CD14-positive monocyte (primary cell): ENCODE measurements at regions of chr3 and their contacts with region 1.

Region 1: DNA sequence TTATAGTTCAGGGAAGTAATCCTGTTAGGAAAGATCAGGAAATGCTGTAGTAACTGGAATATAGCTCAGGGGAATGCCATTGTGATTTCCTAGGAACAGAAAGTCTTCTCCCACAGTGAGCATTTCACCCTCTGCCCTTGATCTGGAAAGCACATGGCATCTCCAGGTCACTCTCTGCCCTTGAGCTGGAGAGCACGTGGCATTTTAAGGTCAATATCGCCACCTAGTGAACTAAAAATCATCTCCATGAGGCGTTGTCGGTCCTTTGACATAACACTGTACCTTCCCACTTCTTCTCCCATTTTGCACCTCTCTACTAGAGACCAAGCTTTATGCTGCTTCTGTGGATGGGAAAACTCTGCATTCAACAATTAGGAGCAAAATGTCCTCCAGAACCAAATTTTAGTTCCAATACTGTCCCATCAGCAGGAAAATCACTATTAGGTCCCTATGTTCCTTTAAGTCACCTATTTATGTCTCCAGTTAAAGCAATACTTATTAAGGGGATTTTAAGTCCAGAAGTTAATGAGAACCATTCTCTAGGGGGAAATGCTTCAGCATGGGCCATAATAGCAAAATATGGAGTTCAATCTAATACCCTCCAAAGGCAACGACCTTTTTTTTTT is 54.7 kb upstream of the GK5 start:
- DNase-seq: peak; percentile 61 to 78 (median 76)
- H3K4me3 ChIP-seq: no peak overlapping the region
- H3K4me3 Mint-ChIP-seq: no peak overlapping the region
- H3K27ac ChIP-seq: no peak overlapping the region
- H3K27ac Mint-ChIP-seq: peak overlapping the region in 3 of 7 donors; percentile 7 to 68 (median 33)
- H3K4me1 ChIP-seq: peaks cover 27 to 32% of the 10 kb centered on the region in 2 donors
- H3K4me1 Mint-ChIP-seq: peaks cover 39% of the 10 kb centered on the region
- H3K27me3 ChIP-seq: no peaks in the 10 kb centered on the region
- H3K27me3 Mint-ChIP-seq: no peaks in the 10 kb centered on the region
- CTCF ChIP-seq: peak; percentile 79

Region 2: DNA sequence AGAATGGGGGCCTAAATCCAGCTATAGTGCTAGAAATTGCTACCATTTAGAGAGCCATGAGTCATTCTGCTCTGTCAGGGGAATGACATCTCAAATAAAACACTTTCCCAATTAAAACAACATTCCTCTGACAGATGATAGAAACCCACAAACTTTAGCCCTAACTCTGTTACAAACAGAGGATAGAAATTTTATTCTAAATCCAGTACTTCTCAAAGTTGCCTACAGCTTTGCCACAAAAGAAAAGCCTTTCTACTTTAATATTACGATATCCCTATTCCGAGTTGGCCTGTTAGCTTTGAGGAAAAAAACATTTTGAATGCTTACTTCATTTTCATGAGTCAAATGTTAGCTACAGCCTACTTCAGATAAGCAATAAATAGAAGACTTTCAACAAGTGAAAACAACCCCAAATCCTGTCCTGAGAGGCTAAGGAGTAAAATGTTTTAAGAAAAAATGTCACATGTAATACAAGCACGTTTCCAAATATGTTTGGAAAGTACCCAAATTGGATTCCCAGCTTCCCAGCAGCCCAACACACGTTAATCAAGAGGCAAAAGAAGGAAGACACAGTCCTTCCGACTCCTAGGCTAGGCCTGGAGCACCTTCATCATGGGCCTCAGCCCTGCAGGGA is 320.0 kb before region 1 on chr3:
- intact Hi-C with region 1: loop called (anchors 5 to 10 kb)
- DNase-seq: no peak
- H3K4me3 ChIP-seq: no peak overlapping the region
- H3K4me3 Mint-ChIP-seq: no peak overlapping the region
- H3K27ac ChIP-seq: no peak overlapping the region
- H3K27ac Mint-ChIP-seq: no peak overlapping the region
- H3K4me1 ChIP-seq: no peaks in the 10 kb centered on the region
- H3K4me1 Mint-ChIP-seq: peaks cover 1% of the 10 kb centered on the region
- H3K27me3 ChIP-seq: no peaks in the 10 kb centered on the region
- H3K27me3 Mint-ChIP-seq: no peaks in the 10 kb centered on the region
- CTCF ChIP-seq: no peak

Region 3: GRCh38 chr3:142124243-142124642 is 155.8 kb before region 1 on chr3:
- intact Hi-C with region 1: loop called in 1 of 2 experiments (anchors 2 kb)
- DNase-seq: no peak
- H3K4me3 ChIP-seq: no peak overlapping the region
- H3K4me3 Mint-ChIP-seq: no peak overlapping the region
- H3K27ac ChIP-seq: no peak overlapping the region
- H3K27ac Mint-ChIP-seq: no peak overlapping the region
- H3K4me1 ChIP-seq: no peaks in the 10 kb centered on the region
- H3K4me1 Mint-ChIP-seq: peaks cover 2% of the 10 kb centered on the region
- H3K27me3 ChIP-seq: no peaks in the 10 kb centered on the region
- H3K27me3 Mint-ChIP-seq: no peaks in the 10 kb centered on the region
- CTCF ChIP-seq: no peak

Region 4: GRCh38 chr3:142180761-142181362 is 99.2 kb before region 1 on chr3:
- intact Hi-C with region 1: loop called (anchors 5 to 10 kb)
- DNase-seq: peak; percentile 11 to 35 (median 26)
- H3K4me3 ChIP-seq: no peak overlapping the region
- H3K4me3 Mint-ChIP-seq: no peak overlapping the region
- H3K27ac ChIP-seq: no peak overlapping the region
- H3K27ac Mint-ChIP-seq: peak overlapping the region in 2 of 7 donors; percentile 4 to 66
- H3K4me1 ChIP-seq: no peaks in the 10 kb centered on the region
- H3K4me1 Mint-ChIP-seq: no peaks in the 10 kb centered on the region
- H3K27me3 ChIP-seq: no peaks in the 10 kb centered on the region
- H3K27me3 Mint-ChIP-seq: no peaks in the 10 kb centered on the region
- CTCF ChIP-seq: peak; percentile 67

Region 5: DNA sequence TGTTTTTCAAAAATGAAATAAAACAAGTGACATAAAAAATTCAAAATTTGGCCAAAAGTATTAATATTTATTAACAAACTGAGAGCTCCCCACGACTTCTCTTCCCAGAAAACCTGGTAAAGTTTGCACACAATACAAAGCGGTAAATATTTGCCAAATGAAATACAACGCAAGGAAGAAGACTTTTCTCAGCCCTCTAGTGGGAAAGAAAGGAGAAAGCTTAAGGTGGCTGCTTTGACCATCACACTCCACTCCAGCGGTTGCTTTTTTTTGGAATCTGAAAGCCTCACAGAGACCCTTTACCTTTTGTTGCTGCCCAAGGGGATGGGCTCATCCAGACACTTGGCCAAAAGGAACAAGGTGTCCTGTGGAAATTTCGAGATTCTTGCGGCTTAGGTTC is 53.6 kb before region 1 on chr3:
- intact Hi-C with region 1: loop called (anchors 5 to 10 kb)
- DNase-seq: no peak
- H3K4me3 ChIP-seq: no peak overlapping the region
- H3K4me3 Mint-ChIP-seq: no peak overlapping the region
- H3K27ac ChIP-seq: no peak overlapping the region
- H3K27ac Mint-ChIP-seq: no peak overlapping the region
- H3K4me1 ChIP-seq: peaks cover 11 to 16% of the 10 kb centered on the region in 2 donors
- H3K4me1 Mint-ChIP-seq: peaks cover 16% of the 10 kb centered on the region
- H3K27me3 ChIP-seq: no peaks in the 10 kb centered on the region
- H3K27me3 Mint-ChIP-seq: no peaks in the 10 kb centered on the region
- CTCF ChIP-seq: no peak

Region 6: DNA sequence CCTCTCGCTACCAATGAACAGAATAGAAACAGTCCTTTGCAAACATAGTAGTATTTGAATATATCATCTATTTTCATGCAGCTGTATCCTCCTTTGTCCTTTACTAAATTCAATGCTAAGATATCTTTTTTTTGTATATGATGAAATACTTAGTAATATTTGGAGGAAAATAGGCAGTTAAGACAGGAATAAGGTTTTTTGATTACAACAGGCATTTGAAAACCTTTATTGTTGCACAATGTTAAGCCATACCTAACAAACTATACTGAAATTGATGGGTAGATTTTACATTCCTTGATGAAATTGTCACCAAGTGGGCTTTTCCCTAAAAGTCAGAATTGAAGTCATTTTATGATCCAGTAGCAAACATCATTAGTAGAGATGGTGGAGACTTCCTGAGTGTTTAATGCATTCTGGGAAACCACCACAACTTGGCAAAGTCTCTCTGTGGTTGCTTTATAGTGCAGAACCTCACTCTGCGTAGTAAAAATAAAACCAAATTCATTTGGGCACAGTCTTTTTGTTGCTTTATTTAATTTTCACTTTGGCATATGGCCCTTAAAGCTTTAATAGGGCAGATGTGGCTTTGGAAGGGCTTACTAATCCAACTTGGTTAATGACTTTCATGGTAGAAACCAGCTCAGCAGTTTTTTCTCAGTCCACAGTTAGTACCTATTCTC is 1907.6 kb after region 1 on chr3:
- intact Hi-C with region 1: no loop called
- DNase-seq: no peak
- H3K4me3 ChIP-seq: no peak overlapping the region
- H3K4me3 Mint-ChIP-seq: no peak overlapping the region
- H3K27ac ChIP-seq: no peak overlapping the region
- H3K27ac Mint-ChIP-seq: no peak overlapping the region
- H3K4me1 ChIP-seq: no peaks in the 10 kb centered on the region
- H3K4me1 Mint-ChIP-seq: no peaks in the 10 kb centered on the region
- H3K27me3 ChIP-seq: no peaks in the 10 kb centered on the region
- H3K27me3 Mint-ChIP-seq: no peaks in the 10 kb centered on the region
- CTCF ChIP-seq: no peak